Activated B cell treated with CpG ODN at 0.5 μM for 24 hours (primary cell): ENCODE measurements at regions of chr4 and their contacts with region 1.

Region 1: GRCh38 chr4:158906073-158906472 is 137.2 kb downstream of the FNIP2 start:
- DNase-seq: no peak
- ATAC-seq: no peak
- H3K4me3 Mint-ChIP-seq: no peak overlapping the region
- H3K27ac Mint-ChIP-seq: no peak overlapping the region
- H3K4me1 Mint-ChIP-seq: peaks cover 4% of the 10 kb centered on the region
- H3K27me3 Mint-ChIP-seq: peaks cover 24% of the 10 kb centered on the region
- CTCF ChIP-seq: no peak

Region 2: GRCh38 chr4:159006202-159006601 is 100.1 kb after region 1 on chr4:
- CTCF ChIA-PET with region 1: no interaction called
- POLR2A ChIA-PET with region 1: interaction called, 10 read pairs
- intact Hi-C with region 1: no loop called
- DNase-seq: no peak
- ATAC-seq: no peak
- H3K4me3 Mint-ChIP-seq: no peak overlapping the region
- H3K27ac Mint-ChIP-seq: no peak overlapping the region
- H3K4me1 Mint-ChIP-seq: no peaks in the 10 kb centered on the region
- H3K27me3 Mint-ChIP-seq: peaks cover 26% of the 10 kb centered on the region
- CTCF ChIP-seq: no peak